H1 (cell line): ENCODE measurements at regions of chr1 and their contacts with region 1.

Region 1: DNA sequence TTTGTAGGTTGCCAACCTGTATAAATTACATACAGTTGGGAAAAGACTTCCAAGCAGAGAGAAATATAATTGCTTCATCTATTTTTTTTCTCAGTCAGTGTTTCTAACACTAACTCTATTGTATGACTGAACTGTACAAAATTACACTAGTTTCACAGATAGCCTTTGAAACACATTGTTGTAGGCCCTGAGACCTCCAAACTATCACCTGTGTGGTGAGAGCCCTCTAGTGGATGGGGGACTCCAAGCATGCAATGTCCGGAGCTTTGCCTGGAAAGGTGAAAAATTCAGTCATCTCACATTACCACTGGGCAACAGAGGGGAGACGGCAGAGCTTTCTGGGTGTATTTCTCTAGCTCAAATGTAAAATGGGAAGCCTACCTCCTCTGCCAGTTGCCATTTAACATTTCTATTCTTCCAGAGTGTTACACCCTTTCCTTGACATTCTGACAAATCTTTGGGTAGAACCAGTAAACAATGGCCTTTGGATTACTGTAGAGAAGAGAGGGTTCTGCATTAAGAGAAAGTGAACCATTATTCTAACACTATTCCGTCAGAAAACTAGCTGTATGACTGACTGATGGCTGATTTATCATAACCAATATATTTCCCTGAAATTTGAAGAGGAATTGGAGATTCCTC is 212.2 kb downstream of the LYPLAL1 start:
- DNase-seq: peak; percentile 25 to 64
- H3K4me3 ChIP-seq: no peak overlapping the region
- H3K27ac ChIP-seq: no peak overlapping the region
- H3K4me1 ChIP-seq: no peaks in the 10 kb centered on the region
- H3K27me3 ChIP-seq: no peaks in the 10 kb centered on the region
- CTCF ChIP-seq: peak; percentile 76 to 94 (median 81)
- EP300 ChIP-seq: no peak
- POLR2A ChIP-seq: no peak
- RAD21 ChIP-seq: peak; percentile 90 to 93

Region 2: DNA sequence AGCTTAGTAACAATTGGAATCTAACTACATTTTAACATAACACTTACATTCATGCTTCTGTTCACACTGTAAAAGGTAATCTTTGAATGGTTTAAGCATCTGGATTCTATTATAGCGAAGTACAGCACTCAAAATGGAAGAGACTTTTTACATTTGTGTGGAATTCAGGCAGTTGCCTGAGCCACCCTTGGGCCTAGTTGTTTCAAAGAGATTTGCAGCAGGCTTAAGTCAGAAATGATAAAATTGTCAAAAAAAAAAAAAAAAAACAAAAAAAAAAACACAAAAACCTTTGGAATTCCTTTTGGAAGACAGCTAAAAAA is 12.3 kb before region 1 on chr1:
- CTCF ChIA-PET with region 1: interaction called, 16 read pairs
- POLR2A ChIA-PET with region 1: interaction called, 3 read pairs
- DNase-seq: no peak
- H3K4me3 ChIP-seq: no peak overlapping the region
- H3K27ac ChIP-seq: no peak overlapping the region
- H3K4me1 ChIP-seq: peaks cover 0 to 4% (median 0%) of the 10 kb centered on the region in 4 experiments; a peak in 1 of 7 replicates
- H3K27me3 ChIP-seq: no peaks in the 10 kb centered on the region
- CTCF ChIP-seq: no peak
- EP300 ChIP-seq: no peak
- POLR2A ChIP-seq: no peak
- RAD21 ChIP-seq: no peak

Region 3: GRCh38 chr1:219398815-219399396 is 13.0 kb after region 1 on chr1:
- CTCF ChIA-PET with region 1: interaction called, 16 read pairs
- POLR2A ChIA-PET with region 1: no interaction called
- DNase-seq: no peak
- H3K4me3 ChIP-seq: no peak overlapping the region
- H3K27ac ChIP-seq: no peak overlapping the region
- H3K4me1 ChIP-seq: no peaks in the 10 kb centered on the region; a peak in 1 of 7 replicates
- H3K27me3 ChIP-seq: no peaks in the 10 kb centered on the region
- CTCF ChIP-seq: no peak
- EP300 ChIP-seq: no peak
- POLR2A ChIP-seq: no peak
- RAD21 ChIP-seq: no peak

Region 4: GRCh38 chr1:219660666-219661463 is 275.0 kb after region 1 on chr1:
- CTCF ChIA-PET with region 1: interaction called, 19 read pairs
- POLR2A ChIA-PET with region 1: no interaction called
- DNase-seq: peak; percentile 81 to 91
- H3K4me3 ChIP-seq: peak overlapping the region; percentile 11 to 55 (median 38); a peak in 7 of 8 replicates
- H3K27ac ChIP-seq: peak overlapping the region; percentile 49
- H3K4me1 ChIP-seq: peaks cover 0 to 8% (median 3%) of the 10 kb centered on the region in 4 experiments; a peak in 5 of 7 replicates
- H3K27me3 ChIP-seq: no peaks in the 10 kb centered on the region
- CTCF ChIP-seq: peak; percentile 83 to 94 (median 93)
- EP300 ChIP-seq: peak in 1 of 2 experiments; percentile 28; a peak in 1 of 3 replicates
- POLR2A ChIP-seq: peak in 1 of 2 experiments; percentile 36; a peak in 1 of 3 replicates
- RAD21 ChIP-seq: peak; percentile 94 to 96